Posterior vena cava (tissue), 2 donors: ENCODE measurements at regions of chr20 and their contacts with region 1.

Region 1: GRCh38 chr20:50172347-50173013 is 18.1 kb upstream of the CEBPB start:
- DNase-seq: peak; percentile 93

Region 2: DNA sequence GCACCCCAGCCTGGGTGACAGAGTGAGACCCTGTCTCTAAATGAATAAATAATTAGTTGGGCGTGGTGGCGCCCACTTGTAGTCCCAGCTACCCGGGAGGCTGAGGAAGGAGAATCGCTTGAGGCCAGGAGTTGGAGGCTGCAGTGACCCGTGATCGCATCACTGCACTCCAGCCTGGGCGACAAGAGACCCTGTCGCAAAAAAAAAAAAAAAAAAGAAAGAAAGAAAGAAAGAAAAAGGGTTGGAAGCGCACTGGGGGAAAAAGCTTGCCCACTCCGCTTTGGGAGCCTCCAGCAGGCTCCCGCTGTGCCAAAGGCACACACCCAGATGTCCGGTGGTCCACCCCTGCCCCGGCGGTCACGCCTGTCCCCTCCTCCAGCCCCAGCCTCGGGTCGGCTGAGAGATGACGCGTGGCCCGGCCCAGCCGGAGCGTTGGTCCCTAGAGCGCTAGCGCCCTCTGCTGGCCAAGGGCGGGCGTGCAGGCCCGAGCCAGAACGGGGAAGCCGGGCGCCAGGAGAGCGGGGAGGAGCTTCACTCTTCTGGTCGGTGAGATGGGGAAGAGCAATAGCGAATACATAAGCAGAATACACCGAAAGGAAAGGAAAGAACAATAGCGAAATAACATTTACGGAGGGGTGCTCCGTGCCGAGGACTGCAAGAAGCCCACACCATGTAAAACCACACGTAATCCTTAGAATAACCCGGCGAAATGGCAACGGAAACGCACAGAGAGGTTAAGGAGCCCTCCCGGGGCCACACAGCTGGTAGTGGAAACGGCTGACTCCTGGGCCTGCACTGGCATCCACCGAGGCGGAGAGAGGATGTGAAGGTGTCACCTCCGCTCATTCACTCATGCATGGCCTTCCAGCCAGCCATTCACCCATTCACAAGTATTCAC is 101.2 kb before region 1 on chr20:
- intact Hi-C with region 1: no loop called
- DNase-seq: peak; percentile 98

Region 3: DNA sequence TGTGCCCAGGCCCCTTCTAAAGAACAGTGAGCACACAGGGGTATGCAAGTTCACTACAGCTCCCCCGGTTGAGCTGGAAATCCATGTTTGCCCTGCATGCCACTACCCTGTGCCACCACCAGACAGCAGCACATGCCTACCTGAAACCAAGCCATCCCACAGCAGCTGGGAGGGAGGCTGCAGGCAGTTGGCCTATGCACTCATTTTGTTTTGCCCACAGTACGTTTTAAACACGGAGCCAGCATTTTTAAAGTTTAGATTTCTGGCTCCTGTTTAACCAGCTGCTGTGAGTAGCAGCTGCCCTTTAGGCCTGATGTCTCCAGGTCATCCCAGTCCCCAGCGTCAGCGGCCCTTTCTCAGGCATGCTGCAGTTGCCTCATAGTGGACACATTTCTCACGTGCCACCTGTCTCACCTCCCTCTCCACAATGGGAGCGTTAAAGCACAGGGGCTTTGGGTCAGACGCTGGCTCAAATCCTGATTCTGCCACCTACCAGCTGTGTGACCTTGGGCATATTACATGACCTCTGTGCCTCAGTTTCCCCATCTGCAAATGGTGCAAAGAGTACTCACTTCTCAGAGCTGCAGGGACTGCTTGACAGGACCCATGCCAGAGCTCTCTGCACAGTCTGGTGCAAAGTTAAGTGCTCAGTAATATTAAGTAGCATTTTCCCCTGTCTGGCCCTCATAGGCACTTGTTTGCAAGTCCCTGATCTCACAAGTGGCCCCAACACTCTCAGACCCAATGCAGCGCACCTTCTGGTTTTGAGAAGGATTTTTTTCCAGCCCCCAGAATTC is 51.4 kb before region 1 on chr20:
- intact Hi-C with region 1: loop called (anchors 2 to 5 kb)
- DNase-seq: peak; percentile 86

Region 4: GRCh38 chr20:50286609-50287008 is 114.1 kb after region 1 on chr20:
- intact Hi-C with region 1: no loop called
- DNase-seq: no peak